Activated CD8-positive, alpha-beta memory T cell treated with anti-CD3 and anti-CD28 coated beads, Interleukin-2, amount 10 ng/mL, durations not matched to agents 7 days and 5 days (primary cell): ENCODE measurements at regions of chr20 and their contacts with region 1.

Region 1: DNA sequence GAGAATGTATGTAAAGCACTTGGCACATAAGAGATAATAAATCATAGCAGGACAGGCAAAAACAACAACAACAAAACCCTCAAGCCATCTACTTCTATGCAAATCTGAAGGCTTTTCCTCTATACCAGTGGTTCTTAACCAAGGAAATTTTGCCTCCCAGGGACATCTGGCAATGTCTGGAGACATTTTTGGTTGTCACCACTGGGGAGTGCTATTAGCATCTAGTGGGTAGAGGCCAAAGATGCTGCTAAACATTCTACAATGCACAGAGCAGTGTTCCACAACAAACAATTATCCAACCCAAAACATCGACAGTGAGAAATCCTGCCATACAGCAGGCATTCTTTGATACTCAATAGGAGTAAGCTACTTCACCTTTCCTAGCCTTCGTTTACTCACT is 28.2 kb downstream of the NDRG3 start:
- DNase-seq: peak; percentile 43
- ATAC-seq: no peak
- H3K4me3 Mint-ChIP-seq: no peak overlapping the region
- H3K27ac Mint-ChIP-seq: no peak overlapping the region
- H3K4me1 Mint-ChIP-seq: peaks cover 5% of the 10 kb centered on the region
- H3K27me3 Mint-ChIP-seq: no peaks in the 10 kb centered on the region

Region 2: GRCh38 chr20:36736451-36737182 is 19.0 kb after region 1 on chr20:
- CTCF ChIA-PET with region 1: interaction called, 10 read pairs
- DNase-seq: no peak
- ATAC-seq: no peak
- H3K4me3 Mint-ChIP-seq: no peak overlapping the region
- H3K27ac Mint-ChIP-seq: peak overlapping the region; percentile 43
- H3K4me1 Mint-ChIP-seq: peaks cover 35% of the 10 kb centered on the region
- H3K27me3 Mint-ChIP-seq: no peaks in the 10 kb centered on the region